ENCODE measurements at regions of chr7 and their contacts with region 1.

Region 1: DNA sequence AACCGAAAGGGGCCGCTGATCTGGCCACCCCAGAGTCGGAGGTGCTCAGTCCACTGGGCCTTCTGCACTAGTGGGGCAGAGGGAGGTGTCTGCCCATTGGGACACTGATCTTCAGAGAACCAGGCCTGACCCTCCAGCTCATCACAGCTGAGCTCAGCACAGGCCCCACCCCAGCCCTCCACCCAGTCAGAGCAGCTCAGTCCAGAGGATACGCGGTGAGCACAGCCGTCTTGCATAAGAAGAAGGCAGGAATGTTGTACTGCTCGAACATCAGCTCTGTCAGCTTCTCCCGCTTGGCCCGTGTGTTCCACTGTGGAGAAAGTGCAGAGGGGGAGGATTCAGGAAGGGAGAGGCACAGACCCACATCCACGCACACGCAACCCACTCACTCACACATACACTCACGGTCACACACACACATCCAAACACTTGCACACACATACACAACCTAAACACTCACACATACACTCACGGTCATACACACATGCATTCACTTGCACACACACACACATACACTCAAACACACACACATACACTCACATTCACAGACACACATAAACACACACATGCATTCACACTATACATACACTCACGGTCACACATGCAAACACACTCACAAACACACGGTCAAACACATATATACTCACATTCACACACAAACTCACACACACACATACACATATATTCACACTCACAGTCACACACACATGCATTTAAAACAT is 6.3 kb downstream of the ACTL6B start:
- DNase-seq: peak; percentile 71 to 73
- H3K4me3 ChIP-seq: no peak overlapping the region
- H3K4me3 Mint-ChIP-seq: no peak overlapping the region
- H3K27ac Mint-ChIP-seq: no peak overlapping the region
- H3K4me1 ChIP-seq: peaks cover 6% of the 10 kb centered on the region
- H3K4me1 Mint-ChIP-seq: peaks cover 7% of the 10 kb centered on the region
- H3K27me3 ChIP-seq: no peaks in the 10 kb centered on the region
- H3K27me3 Mint-ChIP-seq: no peaks in the 10 kb centered on the region
- CTCF ChIP-seq: no peak

Region 2: GRCh38 chr7:100611974-100612729 is 37.8 kb before region 1 on chr7 and contains the start of gene MOSPD3:
- CTCF ChIA-PET with region 1: no interaction called
- POLR2A ChIA-PET with region 1: interaction called, 4 read pairs
- intact Hi-C with region 1: loop called (anchors 1 kb)
- DNase-seq: peak; percentile 99
- H3K4me3 ChIP-seq: peak within 1 kb of the TSS; percentile 50
- H3K4me3 Mint-ChIP-seq: peak within 1 kb of the TSS; percentile 86
- H3K27ac Mint-ChIP-seq: peak within 1 kb of the TSS; percentile 95
- H3K4me1 ChIP-seq: peaks cover 10% of the 10 kb centered on the region; the same call in 1 of the 2 replicates
- H3K4me1 Mint-ChIP-seq: no peaks in the 10 kb centered on the region
- H3K27me3 ChIP-seq: no peaks in the 10 kb centered on the region
- H3K27me3 Mint-ChIP-seq: no peaks in the 10 kb centered on the region
- CTCF ChIP-seq: no peak
- total RNA-seq, gene MOSPD3: 24.6 and 24.7 TPM in 2 replicates

Region 3: DNA sequence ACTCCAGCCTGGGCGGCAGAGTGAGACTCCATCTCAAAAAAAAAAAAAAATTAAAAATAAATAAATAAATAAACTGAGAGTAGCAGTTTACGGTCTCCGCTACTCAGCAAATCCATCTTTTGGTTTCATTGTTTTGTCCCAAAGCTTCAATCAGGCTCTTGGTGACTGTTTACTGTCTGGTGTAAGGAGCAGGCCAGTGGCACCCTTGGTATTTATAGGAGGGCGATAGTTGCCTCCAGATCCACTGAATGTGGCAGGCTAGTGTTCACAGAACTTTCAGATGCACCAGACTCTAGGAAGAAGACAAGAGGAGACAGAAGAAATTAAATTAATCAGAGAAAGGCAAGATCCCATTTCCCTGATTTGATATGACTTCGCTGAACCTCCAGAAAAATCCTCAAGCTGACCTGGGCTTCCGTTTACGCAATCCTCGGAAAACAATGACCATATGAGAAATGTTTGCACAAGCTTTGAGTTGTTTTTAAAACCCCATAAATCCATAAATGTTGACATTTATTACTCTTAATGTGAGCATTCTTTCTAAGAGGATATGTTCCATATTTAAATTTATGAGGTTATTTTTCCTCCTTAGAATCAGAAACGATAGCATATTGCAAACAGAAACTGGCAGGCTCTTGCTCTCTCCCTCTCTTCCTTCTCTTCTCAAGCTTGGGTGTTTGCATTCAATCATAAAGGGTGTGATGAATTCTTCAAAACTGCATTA is 292.2 kb after region 1 on chr7:
- CTCF ChIA-PET with region 1: no interaction called
- POLR2A ChIA-PET with region 1: no interaction called
- intact Hi-C with region 1: no loop called
- DNase-seq: peak; percentile 68 to 71
- H3K4me3 ChIP-seq: no peak overlapping the region
- H3K4me3 Mint-ChIP-seq: peak overlapping the region; percentile 21
- H3K27ac Mint-ChIP-seq: peak overlapping the region; percentile 2
- H3K4me1 ChIP-seq: peaks cover 13% of the 10 kb centered on the region
- H3K4me1 Mint-ChIP-seq: peaks cover 11% of the 10 kb centered on the region
- H3K27me3 ChIP-seq: no peaks in the 10 kb centered on the region
- H3K27me3 Mint-ChIP-seq: no peaks in the 10 kb centered on the region
- CTCF ChIP-seq: no peak